Activated CD4-positive, alpha-beta T cell treated with anti-CD3 and anti-CD28 coated beads, Interleukin-2, amount 10 ng/mL, durations not matched to agents 24 days and 14 days (primary cell): ENCODE measurements at regions of chr18 and their contacts with region 1.

Region 1: DNA sequence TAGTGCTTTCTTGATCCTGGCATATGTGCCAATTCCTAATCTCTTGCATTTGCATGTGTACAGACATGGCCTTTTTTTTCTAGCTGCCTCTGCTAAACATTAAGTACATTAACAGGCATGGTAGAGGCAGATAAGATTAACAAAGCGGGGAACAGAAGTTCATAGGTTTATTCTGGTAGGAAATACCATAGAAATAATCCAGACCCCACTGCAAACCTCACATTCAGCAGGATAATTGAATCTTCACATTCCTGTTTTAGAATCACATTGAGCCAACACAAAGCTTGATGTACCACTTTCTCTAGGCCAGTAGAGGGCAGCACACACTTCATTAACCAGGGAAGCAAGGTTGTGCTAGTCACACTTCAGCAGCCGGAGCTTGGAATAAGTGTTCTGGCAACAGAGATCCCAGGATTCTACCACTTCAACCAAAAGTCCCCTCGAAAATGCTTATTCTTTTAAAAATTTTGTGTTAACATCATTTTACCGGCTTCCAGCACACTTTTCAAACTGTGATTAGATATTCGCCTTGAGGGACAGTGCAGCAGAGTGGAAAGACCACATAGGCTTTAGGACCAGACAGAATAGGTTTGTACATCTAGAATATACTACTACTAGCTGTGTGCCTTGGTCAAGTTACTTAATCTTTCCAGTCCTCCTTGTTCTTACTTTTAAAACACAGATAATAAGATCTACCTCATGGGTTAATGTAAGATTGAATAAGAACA is 420.2 kb upstream of the CHST9 start:
- DNase-seq: peak; percentile 76
- H3K4me3 Mint-ChIP-seq: no peak overlapping the region
- H3K27ac Mint-ChIP-seq: no peak overlapping the region
- H3K4me1 Mint-ChIP-seq: no peaks in the 10 kb centered on the region
- H3K27me3 Mint-ChIP-seq: no peaks in the 10 kb centered on the region

Region 2: GRCh38 chr18:26621161-26622026 is 983.9 kb before region 1 on chr18:
- intact Hi-C with region 1: loop called (anchors 10 kb)
- DNase-seq: peak; percentile 77
- H3K4me3 Mint-ChIP-seq: peak overlapping the region; percentile 68
- H3K27ac Mint-ChIP-seq: no peak overlapping the region
- H3K4me1 Mint-ChIP-seq: no peaks in the 10 kb centered on the region
- H3K27me3 Mint-ChIP-seq: no peaks in the 10 kb centered on the region

Region 3: GRCh38 chr18:27901424-27902226 is 296.4 kb after region 1 on chr18:
- intact Hi-C with region 1: no loop called
- DNase-seq: no peak
- H3K4me3 Mint-ChIP-seq: no peak overlapping the region
- H3K27ac Mint-ChIP-seq: no peak overlapping the region
- H3K4me1 Mint-ChIP-seq: no peaks in the 10 kb centered on the region
- H3K27me3 Mint-ChIP-seq: no peaks in the 10 kb centered on the region

Region 4: GRCh38 chr18:28189400-28190239 is 584.3 kb after region 1 on chr18:
- intact Hi-C with region 1: loop called (anchors 5 kb)
- DNase-seq: peak; percentile 65
- H3K4me3 Mint-ChIP-seq: no peak overlapping the region
- H3K27ac Mint-ChIP-seq: no peak overlapping the region
- H3K4me1 Mint-ChIP-seq: no peaks in the 10 kb centered on the region
- H3K27me3 Mint-ChIP-seq: no peaks in the 10 kb centered on the region

Region 5: GRCh38 chr18:28846958-28847357 is 1241.7 kb after region 1 on chr18:
- intact Hi-C with region 1: no loop called
- DNase-seq: no peak
- H3K4me3 Mint-ChIP-seq: no peak overlapping the region
- H3K27ac Mint-ChIP-seq: no peak overlapping the region
- H3K4me1 Mint-ChIP-seq: no peaks in the 10 kb centered on the region
- H3K27me3 Mint-ChIP-seq: no peaks in the 10 kb centered on the region